Esophagus squamous epithelium (tissue), 5 donors: ENCODE measurements at regions of chr13 and their contacts with region 1.

Region 1: GRCh38 chr13:94435604-94436226 is 43.8 kb downstream of the DCT start:
- DNase-seq: no peak
- H3K4me3 ChIP-seq: no peak overlapping the region
- H3K27ac ChIP-seq: no peak overlapping the region
- H3K4me1 ChIP-seq: peaks cover 0 to 17% (median 0%) of the 10 kb centered on the region in 3 donors
- H3K27me3 ChIP-seq: no peaks in the 10 kb centered on the region
- CTCF ChIP-seq: peak; percentile 33 to 61 (median 48)
- POLR2A ChIP-seq: no peak

Region 2: GRCh38 chr13:94617389-94618000 is 181.8 kb after region 1 on chr13:
- intact Hi-C with region 1: loop called (anchors 5 kb)
- DNase-seq: no peak
- H3K4me3 ChIP-seq: no peak overlapping the region
- H3K27ac ChIP-seq: no peak overlapping the region
- H3K4me1 ChIP-seq: no peaks in the 10 kb centered on the region
- H3K27me3 ChIP-seq: no peaks in the 10 kb centered on the region
- CTCF ChIP-seq: peak in 5 of 6 experiments; percentile 46 to 66 (median 52)
- POLR2A ChIP-seq: no peak